ENCODE measurements at regions of chr12 and their contacts with region 1.

Region 1: DNA sequence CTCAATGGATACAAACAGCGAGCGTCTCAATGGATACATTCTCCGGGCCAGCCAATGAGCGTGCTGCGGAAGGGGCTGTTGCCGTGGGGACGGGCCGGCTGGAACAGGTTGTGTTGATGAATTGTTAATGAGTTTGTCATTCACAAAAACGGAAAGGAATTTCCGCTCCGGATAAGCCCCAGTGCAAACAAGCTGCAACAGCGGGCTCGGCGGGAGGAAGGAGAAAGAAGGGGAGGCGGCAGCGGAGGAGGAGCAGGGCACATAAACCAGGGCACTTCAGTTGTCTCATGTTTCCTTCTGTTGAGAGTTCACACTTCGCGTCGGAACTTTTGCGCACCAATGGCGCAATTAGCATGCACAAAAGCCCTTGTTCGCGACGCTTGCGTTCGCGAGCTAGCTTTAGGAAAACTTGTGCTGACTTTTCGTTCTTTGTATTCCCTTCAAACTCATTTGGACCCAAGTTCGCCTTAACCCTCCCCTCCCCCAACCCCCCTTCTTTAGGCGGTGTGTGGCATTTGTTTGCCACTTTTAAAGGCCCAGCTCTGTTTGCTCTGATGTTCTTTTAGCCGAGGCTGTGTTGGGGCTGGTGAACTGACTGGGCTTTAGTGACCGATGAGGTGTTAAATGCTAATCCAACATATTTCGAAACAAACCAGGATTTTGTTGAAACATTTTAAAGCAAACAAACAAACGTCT is at the start of gene DUSP6:
- DNase-seq: peak; percentile 95 to 98
- H3K4me3 ChIP-seq: peak within 1 kb of the TSS; percentile 84
- H3K4me3 Mint-ChIP-seq: peak within 1 kb of the TSS; percentile 80
- H3K27ac Mint-ChIP-seq: peak within 1 kb of the TSS; percentile 98
- H3K4me1 ChIP-seq: peaks cover 25% of the 10 kb centered on the region
- H3K4me1 Mint-ChIP-seq: peaks cover 21% of the 10 kb centered on the region
- H3K27me3 ChIP-seq: no peaks in the 10 kb centered on the region
- H3K27me3 Mint-ChIP-seq: no peaks in the 10 kb centered on the region
- CTCF ChIP-seq: no peak
- total RNA-seq, gene DUSP6: 22.4 and 30.8 TPM in 2 replicates

Region 2: DNA sequence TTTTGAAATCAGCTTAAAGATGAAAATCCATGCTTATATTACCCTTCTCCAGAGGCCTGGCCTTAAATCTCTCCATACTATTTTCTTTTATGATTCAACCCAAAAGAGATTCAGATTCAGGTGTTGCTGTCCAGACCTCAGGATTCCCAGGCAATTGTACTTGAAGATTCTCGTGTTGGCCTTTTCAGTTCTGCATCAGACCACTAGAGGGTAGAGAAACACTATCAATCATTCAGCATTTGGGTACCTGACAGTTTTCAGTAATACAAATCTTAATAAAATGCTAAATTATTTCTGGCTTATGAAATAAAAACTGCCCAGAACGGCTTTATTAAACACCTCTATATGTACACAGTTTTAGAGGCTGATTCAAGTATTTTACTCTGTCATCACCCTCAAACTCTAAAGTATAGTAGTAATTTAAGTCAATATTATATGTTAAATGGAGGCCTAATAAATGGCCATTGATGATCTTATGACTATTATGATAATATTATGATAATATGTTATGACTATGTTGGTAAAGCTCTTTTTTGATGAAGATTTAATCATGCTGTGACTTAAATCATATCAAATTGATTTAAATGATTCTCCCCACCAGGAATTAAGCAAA is 301.5 kb before region 1 on chr12:
- CTCF ChIA-PET with region 1: interaction called, 3 read pairs
- POLR2A ChIA-PET with region 1: no interaction called
- intact Hi-C with region 1: loop called (anchors 2 kb)
- DNase-seq: peak in 1 of 2 experiments; percentile 61
- H3K4me3 ChIP-seq: no peak overlapping the region
- H3K4me3 Mint-ChIP-seq: no peak overlapping the region
- H3K27ac Mint-ChIP-seq: no peak overlapping the region
- H3K4me1 ChIP-seq: no peaks in the 10 kb centered on the region
- H3K4me1 Mint-ChIP-seq: no peaks in the 10 kb centered on the region
- H3K27me3 ChIP-seq: no peaks in the 10 kb centered on the region
- H3K27me3 Mint-ChIP-seq: no peaks in the 10 kb centered on the region
- CTCF ChIP-seq: peak; percentile 83 to 85

Region 3: GRCh38 chr12:89299931-89300330 is 52.7 kb before region 1 on chr12:
- CTCF ChIA-PET with region 1: no interaction called
- POLR2A ChIA-PET with region 1: no interaction called
- intact Hi-C with region 1: no loop called
- DNase-seq: no peak
- H3K4me3 ChIP-seq: no peak overlapping the region
- H3K4me3 Mint-ChIP-seq: no peak overlapping the region
- H3K27ac Mint-ChIP-seq: no peak overlapping the region
- H3K4me1 ChIP-seq: 0 out of 2 replicates have a peak, but pooled peaks cover under 1% of the 10 kb centered on the region
- H3K4me1 Mint-ChIP-seq: no peaks in the 10 kb centered on the region
- H3K27me3 ChIP-seq: no peaks in the 10 kb centered on the region
- H3K27me3 Mint-ChIP-seq: no peaks in the 10 kb centered on the region
- CTCF ChIP-seq: no peak

Region 4: GRCh38 chr12:89326239-89327040 is 26.2 kb before region 1 on chr12:
- CTCF ChIA-PET with region 1: no interaction called
- POLR2A ChIA-PET with region 1: interaction called, 7 read pairs
- intact Hi-C with region 1: loop called (anchors 2 kb)
- DNase-seq: peak; percentile 65 to 86
- H3K4me3 ChIP-seq: no peak overlapping the region
- H3K4me3 Mint-ChIP-seq: peak overlapping the region; percentile 57
- H3K27ac Mint-ChIP-seq: peak overlapping the region; percentile 73
- H3K4me1 ChIP-seq: peaks cover 40% of the 10 kb centered on the region
- H3K4me1 Mint-ChIP-seq: peaks cover 39% of the 10 kb centered on the region
- H3K27me3 ChIP-seq: no peaks in the 10 kb centered on the region
- H3K27me3 Mint-ChIP-seq: no peaks in the 10 kb centered on the region
- CTCF ChIP-seq: no peak

Region 5: GRCh38 chr12:89384050-89384758 is 31.6 kb after region 1 on chr12:
- CTCF ChIA-PET with region 1: interaction called, 14 read pairs
- POLR2A ChIA-PET with region 1: interaction called, 82 read pairs
- intact Hi-C with region 1: loop called (anchors 1 kb)
- DNase-seq: peak in 1 of 2 experiments; percentile 47
- H3K4me3 ChIP-seq: no peak overlapping the region
- H3K4me3 Mint-ChIP-seq: no peak overlapping the region
- H3K27ac Mint-ChIP-seq: peak overlapping the region; percentile 95
- H3K4me1 ChIP-seq: peaks cover 75% of the 10 kb centered on the region
- H3K4me1 Mint-ChIP-seq: peaks cover 47% of the 10 kb centered on the region
- H3K27me3 ChIP-seq: no peaks in the 10 kb centered on the region
- H3K27me3 Mint-ChIP-seq: no peaks in the 10 kb centered on the region
- CTCF ChIP-seq: no peak

Region 6: DNA sequence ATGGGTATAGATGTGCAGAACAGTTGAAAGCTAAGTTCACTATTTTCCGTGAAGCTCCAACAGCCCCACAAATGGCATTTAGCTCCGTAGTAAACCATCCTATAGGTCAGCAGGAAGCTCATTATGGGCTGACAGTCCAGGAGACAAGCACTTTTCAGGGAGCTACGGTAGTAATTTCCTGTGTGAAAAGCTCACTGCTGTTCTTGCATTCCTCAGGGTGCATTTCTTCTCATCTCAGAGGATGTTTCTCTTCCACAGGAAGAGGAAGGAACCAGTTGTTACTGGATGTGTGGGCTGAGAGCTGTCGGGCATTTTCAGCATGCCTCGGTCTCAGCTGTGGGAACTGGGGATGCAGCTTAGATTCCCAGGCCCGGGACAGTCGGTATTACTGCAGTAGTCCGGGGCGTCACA is 99.2 kb after region 1 on chr12:
- CTCF ChIA-PET with region 1: interaction called, 4 read pairs
- POLR2A ChIA-PET with region 1: interaction called, 8 read pairs
- intact Hi-C with region 1: loop called (anchors 2 kb)
- DNase-seq: no peak
- H3K4me3 ChIP-seq: no peak overlapping the region
- H3K4me3 Mint-ChIP-seq: peak overlapping the region; percentile 33
- H3K27ac Mint-ChIP-seq: no peak overlapping the region
- H3K4me1 ChIP-seq: peaks cover 48% of the 10 kb centered on the region
- H3K4me1 Mint-ChIP-seq: peaks cover 37% of the 10 kb centered on the region
- H3K27me3 ChIP-seq: no peaks in the 10 kb centered on the region
- H3K27me3 Mint-ChIP-seq: no peaks in the 10 kb centered on the region
- CTCF ChIP-seq: no peak

Region 7: GRCh38 chr12:89709157-89709994 is 356.7 kb after region 1 on chr12:
- CTCF ChIA-PET with region 1: no interaction called
- POLR2A ChIA-PET with region 1: no interaction called
- intact Hi-C with region 1: loop called (anchors 10 kb)
- DNase-seq: peak; percentile 98 to 99
- H3K4me3 ChIP-seq: peak overlapping the region; percentile 98
- H3K4me3 Mint-ChIP-seq: peak overlapping the region; percentile 79
- H3K27ac Mint-ChIP-seq: peak overlapping the region; percentile 91
- H3K4me1 ChIP-seq: peaks cover 11% of the 10 kb centered on the region; the same call in 1 of the 2 replicates
- H3K4me1 Mint-ChIP-seq: peaks cover 18% of the 10 kb centered on the region
- H3K27me3 ChIP-seq: no peaks in the 10 kb centered on the region
- H3K27me3 Mint-ChIP-seq: no peaks in the 10 kb centered on the region
- CTCF ChIP-seq: no peak

Measured in Caco-2 (cell line).